ENCODE measurements at regions of chr17 and their contacts with region 1.

Region 1: GRCh38 chr17:37609170-37610040 is at the start of gene SYNRG:
- DNase-seq: peak; percentile 98
- ATAC-seq: peak; percentile 99 to 100
- total RNA-seq, gene SYNRG: 25.2 to 32.0 TPM

Region 2: GRCh38 chr17:37527249-37527851 is 82.1 kb before region 1 on chr17:
- intact Hi-C with region 1: loop called in 1 of 2 experiments (anchors 10 kb)
- DNase-seq: no peak
- ATAC-seq: peak; percentile 46 to 77

Region 3: DNA sequence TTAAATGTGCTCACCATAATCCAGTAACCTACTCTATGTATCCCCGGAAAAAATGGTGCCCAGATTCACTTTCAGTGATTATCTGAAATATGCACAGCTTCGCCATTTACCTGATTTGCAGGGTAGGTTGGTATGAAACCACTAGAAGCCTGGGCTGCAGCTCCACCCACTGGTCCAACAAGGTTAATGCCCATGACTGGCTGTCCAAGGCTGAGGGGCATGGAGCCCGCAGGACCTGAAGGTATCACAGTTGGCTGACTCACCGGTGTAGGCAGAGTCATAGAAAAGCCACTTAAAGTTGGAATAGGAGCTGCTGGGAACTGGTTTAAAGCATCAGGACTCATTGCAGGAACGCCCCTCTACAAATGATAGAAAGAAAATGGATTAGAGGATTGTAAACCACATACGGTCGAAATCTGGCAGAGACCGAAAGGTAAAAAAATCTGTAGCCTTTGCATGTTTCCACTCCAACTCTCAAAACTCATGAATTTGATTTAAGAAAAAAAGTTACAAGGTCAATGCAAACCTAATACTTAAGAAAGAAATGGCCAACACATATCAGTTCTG is 38.8 kb before region 1 on chr17:
- intact Hi-C with region 1: no loop called
- DNase-seq: peak; percentile 36
- ATAC-seq: peak; percentile 68 to 76

Measured in left cardiac atrium (tissue), 4 donors.